Endothelial cell of umbilical vein (primary cell): ENCODE measurements at regions of chr10 and their contacts with region 1.

Region 1: DNA sequence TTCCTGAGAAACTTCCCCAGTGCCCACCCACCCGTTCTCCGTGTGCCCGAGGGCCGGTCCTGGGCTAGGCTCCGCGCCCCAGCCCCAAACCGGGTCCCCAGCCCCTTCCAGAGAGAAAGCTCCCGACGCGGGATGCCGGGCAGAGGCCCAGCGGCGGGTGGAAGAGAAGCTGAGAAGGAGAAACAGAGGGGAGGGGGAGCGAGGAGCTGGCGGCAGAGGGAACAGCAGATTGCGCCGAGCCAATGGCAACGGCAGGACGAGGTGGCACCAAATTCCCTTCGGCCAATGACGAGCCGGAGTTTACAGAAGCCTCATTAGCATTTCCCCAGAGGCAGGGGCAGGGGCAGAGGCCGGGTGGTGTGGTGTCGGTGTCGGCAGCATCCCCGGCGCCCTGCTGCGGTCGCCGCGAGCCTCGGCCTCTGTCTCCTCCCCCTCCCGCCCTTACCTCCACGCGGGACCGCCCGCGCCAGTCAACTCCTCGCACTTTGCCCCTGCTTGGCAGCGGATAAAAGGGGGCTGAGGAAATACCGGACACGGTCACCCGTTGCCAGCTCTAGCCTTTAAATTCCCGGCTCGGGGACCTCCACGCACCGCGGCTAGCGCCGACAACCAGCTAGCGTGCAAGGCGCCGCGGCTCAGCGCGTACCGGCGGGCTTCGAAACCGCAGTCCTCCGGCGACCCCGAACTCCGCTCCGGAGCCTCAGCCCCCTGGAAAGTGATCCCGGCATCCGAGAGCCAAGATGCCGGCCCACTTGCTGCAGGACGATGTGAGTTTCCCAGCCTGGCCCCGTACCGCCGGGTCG is at the start of gene SCD:
- DNase-seq: peak; percentile 92
- H3K4me3 ChIP-seq: peak within 1 kb of the TSS; percentile 85 to 87 (median 85)
- H3K27ac ChIP-seq: peak within 1 kb of the TSS; percentile 48
- H3K4me1 ChIP-seq: peaks cover 42% of the 10 kb centered on the region
- H3K27me3 ChIP-seq: no peaks in the 10 kb centered on the region
- CTCF ChIP-seq: no peak
- POLR2A ChIP-seq: peak; percentile 83
- total RNA-seq, gene SCD: 396 and 426 TPM in 2 replicates

Region 2: DNA sequence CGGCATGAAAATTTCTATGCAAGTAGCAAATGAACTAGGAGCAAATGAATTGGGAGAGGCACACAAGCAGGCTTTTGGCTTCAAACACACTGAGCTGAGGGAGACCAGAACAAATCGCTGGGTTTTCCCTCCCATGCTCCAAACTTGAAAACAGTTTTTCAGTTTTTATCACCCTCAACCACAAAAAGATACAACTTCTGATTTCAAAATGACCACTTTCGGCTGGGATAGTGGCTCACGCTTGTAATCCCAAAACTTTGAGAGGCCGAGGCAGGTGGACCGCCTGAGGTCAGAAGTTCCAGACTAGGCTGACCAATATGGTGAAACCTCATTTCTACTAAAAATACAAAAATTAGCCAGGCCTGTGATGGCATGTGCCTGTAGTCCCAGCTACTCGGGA is 108.5 kb before region 1 on chr10:
- CTCF ChIA-PET with region 1: no interaction called
- POLR2A ChIA-PET with region 1: no interaction called
- dilution Hi-C with region 1: no loop called
- intact Hi-C with region 1: no loop called
- DNase-seq: no peak
- H3K4me3 ChIP-seq: no peak overlapping the region
- H3K27ac ChIP-seq: no peak overlapping the region
- H3K4me1 ChIP-seq: no peaks in the 10 kb centered on the region
- H3K27me3 ChIP-seq: no peaks in the 10 kb centered on the region
- CTCF ChIP-seq: no peak
- POLR2A ChIP-seq: no peak

Region 3: DNA sequence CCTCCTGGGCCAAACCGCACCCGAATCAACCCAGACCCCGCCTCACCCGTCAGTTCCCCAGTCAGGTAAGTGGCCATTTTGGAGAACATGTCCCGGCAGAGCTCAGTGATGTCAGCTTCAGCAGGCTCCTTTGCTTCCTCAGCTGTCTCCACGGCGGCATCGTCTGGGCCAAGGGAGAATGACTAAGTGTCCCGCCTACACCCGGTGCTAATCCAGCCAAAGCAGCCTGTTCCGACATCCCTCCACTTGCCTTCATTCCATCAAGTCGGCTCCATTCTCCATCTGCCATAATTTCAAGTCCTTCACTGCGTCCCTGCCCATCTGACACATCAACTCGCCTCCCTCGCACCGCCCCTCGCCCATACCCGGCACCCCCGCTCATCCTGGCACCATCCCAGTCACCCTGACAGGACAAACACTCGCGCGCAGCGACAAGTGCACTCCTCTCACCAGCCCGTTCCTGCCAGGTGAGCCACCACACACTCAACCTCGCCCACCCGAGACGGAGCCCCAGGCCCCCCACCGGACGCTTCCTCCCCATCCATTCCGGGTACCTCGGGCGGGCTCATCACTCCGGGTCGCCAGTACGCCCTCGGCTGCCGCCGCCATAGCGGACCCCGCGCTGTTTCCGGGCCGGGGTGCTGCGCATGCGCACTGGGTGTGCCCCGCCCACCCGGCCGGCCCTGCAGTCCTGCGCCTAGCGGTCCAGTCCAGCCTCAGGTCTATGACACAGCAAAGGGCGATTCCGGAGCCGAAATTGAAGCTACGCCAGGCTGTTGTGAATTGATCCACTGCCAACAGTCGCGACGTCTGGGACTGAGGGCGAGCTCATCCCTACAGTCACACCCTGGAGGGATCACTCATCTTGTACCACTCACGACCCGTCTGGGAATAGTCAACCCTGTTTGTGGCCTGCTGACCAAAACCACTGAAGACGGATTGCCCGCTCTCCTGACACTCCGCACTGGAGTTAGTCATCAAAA is 60.6 kb before region 1 on chr10 and contains the start of gene BLOC1S2:
- CTCF ChIA-PET with region 1: no interaction called
- POLR2A ChIA-PET with region 1: no interaction called
- dilution Hi-C with region 1: no loop called
- intact Hi-C with region 1: loop called (anchors 5 kb)
- DNase-seq: peak; percentile 90
- H3K4me3 ChIP-seq: peak within 1 kb of the TSS; percentile 8 to 84 (median 75)
- H3K27ac ChIP-seq: peak within 1 kb of the TSS; percentile 44
- H3K4me1 ChIP-seq: peaks cover 14% of the 10 kb centered on the region
- H3K27me3 ChIP-seq: peaks cover 3 to 7% of the 10 kb centered on the region in 2 experiments
- CTCF ChIP-seq: peak in 1 of 2 donors; percentile 8
- POLR2A ChIP-seq: peak; percentile 90
- total RNA-seq, gene BLOC1S2: 45.9 and 54.0 TPM in 2 replicates

Region 4: GRCh38 chr10:100359529-100360150 is 12.7 kb after region 1 on chr10:
- CTCF ChIA-PET with region 1: interaction called, 7 read pairs
- POLR2A ChIA-PET with region 1: no interaction called
- dilution Hi-C with region 1: no loop called
- intact Hi-C with region 1: loop called (anchors 1 kb)
- DNase-seq: no peak
- H3K4me3 ChIP-seq: no peak overlapping the region
- H3K27ac ChIP-seq: peak overlapping the region; percentile 49
- H3K4me1 ChIP-seq: peaks cover 54% of the 10 kb centered on the region
- H3K27me3 ChIP-seq: no peaks in the 10 kb centered on the region
- CTCF ChIP-seq: no peak
- POLR2A ChIP-seq: no peak

Region 5: GRCh38 chr10:100364735-100365391 is 17.9 kb after region 1 on chr10:
- CTCF ChIA-PET with region 1: interaction called, 8 read pairs
- POLR2A ChIA-PET with region 1: interaction called, 3 read pairs
- dilution Hi-C with region 1: no loop called
- intact Hi-C with region 1: loop called (anchors 2 kb)
- DNase-seq: peak; percentile 95
- H3K4me3 ChIP-seq: no peak overlapping the region
- H3K27ac ChIP-seq: peak overlapping the region; percentile 58
- H3K4me1 ChIP-seq: peaks cover 24% of the 10 kb centered on the region
- H3K27me3 ChIP-seq: no peaks in the 10 kb centered on the region
- CTCF ChIP-seq: no peak
- POLR2A ChIP-seq: peak; percentile 41